CD8-positive, alpha-beta T cell (primary cell): ENCODE measurements at regions of chr3 and their contacts with region 1.

Region 1: GRCh38 chr3:49120438-49121131 is at the start of gene USP19:
- DNase-seq: peak; percentile 88 to 98 (median 95)
- ATAC-seq: peak; percentile 90
- H3K4me3 ChIP-seq: peak within 1 kb of the TSS; percentile 85 to 98
- H3K4me3 Mint-ChIP-seq: peak within 1 kb of the TSS; percentile 92
- H3K27ac ChIP-seq: peak within 1 kb of the TSS; percentile 86 to 97
- H3K27ac Mint-ChIP-seq: peak within 1 kb of the TSS; percentile 97
- H3K4me1 ChIP-seq: peaks cover 20% of the 10 kb centered on the region
- H3K4me1 Mint-ChIP-seq: peaks cover 24% of the 10 kb centered on the region
- H3K27me3 ChIP-seq: no peaks in the 10 kb centered on the region
- H3K27me3 Mint-ChIP-seq: no peaks in the 10 kb centered on the region
- CTCF ChIP-seq: no peak
- total RNA-seq, gene USP19: 88.6 to 90.5 TPM

Region 2: GRCh38 chr3:49028673-49029562 is 91.7 kb before region 1 on chr3 and contains the start of gene IMPDH2:
- CTCF ChIA-PET with region 1: interaction called, 3 read pairs
- POLR2A ChIA-PET with region 1: interaction called, 5 read pairs
- intact Hi-C with region 1: loop called in 1 of 2 experiments (anchors 1 kb)
- DNase-seq: peak; percentile 86 to 98 (median 93)
- ATAC-seq: peak; percentile 95
- H3K4me3 ChIP-seq: peak within 1 kb of the TSS; percentile 52 to 81
- H3K4me3 Mint-ChIP-seq: peak within 1 kb of the TSS; percentile 92
- H3K27ac ChIP-seq: peak within 1 kb of the TSS; percentile 77 to 98
- H3K27ac Mint-ChIP-seq: peak within 1 kb of the TSS; percentile 97
- H3K4me1 ChIP-seq: peaks cover 13% of the 10 kb centered on the region
- H3K4me1 Mint-ChIP-seq: peaks cover 25% of the 10 kb centered on the region
- H3K27me3 ChIP-seq: no peaks in the 10 kb centered on the region
- H3K27me3 Mint-ChIP-seq: no peaks in the 10 kb centered on the region
- CTCF ChIP-seq: no peak
- total RNA-seq, gene IMPDH2: 115 to 117 TPM

Region 3: DNA sequence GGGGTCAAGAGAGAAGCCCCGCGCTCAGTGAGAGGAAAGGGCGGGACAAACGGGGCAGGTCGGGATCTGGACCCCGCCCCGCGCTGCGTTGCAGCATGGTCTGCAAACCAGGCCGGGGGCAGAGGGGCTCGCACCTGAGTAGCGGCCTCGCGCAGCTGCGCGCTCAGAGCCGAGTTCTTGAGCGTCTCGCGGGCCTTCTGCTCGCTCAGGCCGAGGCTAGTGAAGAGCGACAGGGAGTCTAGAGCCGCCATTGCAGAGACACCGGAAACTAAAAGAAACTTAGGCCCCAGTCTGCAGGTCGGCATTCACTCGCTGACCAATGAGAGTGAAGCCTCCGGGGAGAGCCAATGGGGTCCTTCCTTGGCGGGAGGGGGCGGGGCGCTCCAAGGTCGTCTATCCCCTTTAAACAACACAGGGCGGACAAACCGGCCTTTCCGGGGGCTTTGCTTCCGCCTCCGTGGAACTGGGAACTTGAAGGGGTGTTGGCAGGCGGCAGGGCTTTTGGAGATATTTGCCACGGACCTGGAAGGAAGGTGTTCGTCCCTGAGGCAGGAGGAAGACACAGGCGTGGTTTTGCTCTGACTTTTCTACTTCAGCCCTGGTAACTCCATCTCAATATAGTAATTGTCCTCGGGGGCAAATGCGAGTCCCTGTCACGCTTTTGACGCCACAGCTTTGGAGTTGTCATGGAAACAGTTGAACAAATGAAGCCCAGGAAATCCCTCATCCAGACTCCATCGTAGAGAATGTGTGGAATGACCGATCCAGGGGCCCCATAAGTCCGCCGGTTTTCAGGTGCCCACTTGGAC is 15.9 kb before region 1 on chr3 and contains the start of gene QARS1:
- CTCF ChIA-PET with region 1: interaction called, 3 read pairs
- POLR2A ChIA-PET with region 1: interaction called, 44 read pairs
- intact Hi-C with region 1: loop called (anchors 1 kb)
- DNase-seq: peak; percentile 69 to 93 (median 90)
- ATAC-seq: peak; percentile 99
- H3K4me3 ChIP-seq: peak within 1 kb of the TSS; percentile 85 to 86
- H3K4me3 Mint-ChIP-seq: peak within 1 kb of the TSS; percentile 98
- H3K27ac ChIP-seq: peak within 1 kb of the TSS; percentile 70 to 73
- H3K27ac Mint-ChIP-seq: peak within 1 kb of the TSS; percentile 97
- H3K4me1 ChIP-seq: peaks cover 15% of the 10 kb centered on the region
- H3K4me1 Mint-ChIP-seq: peaks cover 29% of the 10 kb centered on the region
- H3K27me3 ChIP-seq: no peaks in the 10 kb centered on the region
- H3K27me3 Mint-ChIP-seq: no peaks in the 10 kb centered on the region
- CTCF ChIP-seq: no peak
- total RNA-seq, gene QARS1: 307 to 343 TPM

Region 4: GRCh38 chr3:49165771-49166751 is 45.5 kb after region 1 on chr3 and contains the start of gene CCDC71:
- CTCF ChIA-PET with region 1: no interaction called
- POLR2A ChIA-PET with region 1: interaction called, 7 read pairs
- intact Hi-C with region 1: loop called (anchors 1 kb)
- DNase-seq: peak; percentile 52 to 89 (median 75)
- ATAC-seq: peak; percentile 77
- H3K4me3 ChIP-seq: peak within 1 kb of the TSS; percentile 87 to 92
- H3K4me3 Mint-ChIP-seq: peak within 1 kb of the TSS; percentile 90
- H3K27ac ChIP-seq: peak within 1 kb of the TSS; percentile 60 to 81
- H3K27ac Mint-ChIP-seq: peak within 1 kb of the TSS; percentile 93
- H3K4me1 ChIP-seq: peaks cover 28% of the 10 kb centered on the region
- H3K4me1 Mint-ChIP-seq: peaks cover 44% of the 10 kb centered on the region
- H3K27me3 ChIP-seq: no peaks in the 10 kb centered on the region
- H3K27me3 Mint-ChIP-seq: no peaks in the 10 kb centered on the region
- CTCF ChIP-seq: no peak
- total RNA-seq, gene CCDC71: 15.6 to 15.9 TPM

Region 5: DNA sequence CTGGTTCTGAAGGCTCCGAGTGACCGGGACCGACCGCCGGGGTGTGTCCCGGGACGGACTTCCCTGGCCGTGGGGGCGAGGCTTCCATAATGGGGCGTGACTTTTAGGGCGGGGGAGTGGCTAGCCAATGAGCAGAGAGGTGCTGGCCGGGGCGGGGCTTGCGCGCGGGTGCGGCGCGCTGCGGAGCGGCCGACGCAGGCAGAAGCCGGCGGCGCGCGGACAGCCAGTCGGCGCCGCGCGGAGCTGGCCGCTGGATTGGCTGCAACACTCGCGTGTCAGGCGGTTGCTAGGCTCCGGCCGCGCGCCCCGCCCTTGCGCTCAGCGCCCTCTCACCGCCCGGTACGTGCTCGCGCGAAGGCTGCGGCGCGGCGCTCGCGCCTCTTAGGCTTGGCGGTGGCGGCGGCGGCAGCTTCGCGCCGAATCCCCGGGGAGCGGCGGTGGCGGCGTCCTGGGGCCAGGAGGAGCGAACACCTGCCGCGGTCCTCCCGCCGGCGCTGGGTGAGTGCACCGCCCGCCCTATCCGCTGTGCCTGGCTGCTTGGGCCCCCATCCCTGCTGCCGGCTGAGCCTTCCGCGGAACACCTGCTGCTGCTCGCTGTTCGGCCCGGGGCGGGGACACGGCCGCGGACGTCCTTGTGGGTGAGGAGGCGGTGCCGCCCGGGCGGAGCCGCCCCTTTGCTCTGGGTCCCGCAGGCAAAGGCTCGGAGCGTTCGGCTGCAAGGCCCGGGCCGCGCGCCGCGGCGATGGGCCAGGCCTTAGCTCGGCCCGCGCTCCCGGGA is 349.5 kb after region 1 on chr3 and contains the start of gene DAG1:
- CTCF ChIA-PET with region 1: no interaction called
- POLR2A ChIA-PET with region 1: no interaction called
- intact Hi-C with region 1: loop called in 1 of 2 experiments (anchors 1 kb)
- DNase-seq: peak; percentile 89 to 99 (median 95)
- ATAC-seq: peak; percentile 85
- H3K4me3 ChIP-seq: peak within 1 kb of the TSS; percentile 83 to 97
- H3K4me3 Mint-ChIP-seq: peak within 1 kb of the TSS; percentile 88
- H3K27ac ChIP-seq: peak within 1 kb of the TSS; percentile 86 to 87
- H3K27ac Mint-ChIP-seq: peak within 1 kb of the TSS; percentile 94
- H3K4me1 ChIP-seq: peaks cover 21% of the 10 kb centered on the region
- H3K4me1 Mint-ChIP-seq: peaks cover 24% of the 10 kb centered on the region
- H3K27me3 ChIP-seq: no peaks in the 10 kb centered on the region
- H3K27me3 Mint-ChIP-seq: no peaks in the 10 kb centered on the region
- CTCF ChIP-seq: no peak
- total RNA-seq, gene DAG1: 17.0 to 19.9 TPM